ENCODE measurements at regions of chr15 and their contacts with region 1.

Region 1: DNA sequence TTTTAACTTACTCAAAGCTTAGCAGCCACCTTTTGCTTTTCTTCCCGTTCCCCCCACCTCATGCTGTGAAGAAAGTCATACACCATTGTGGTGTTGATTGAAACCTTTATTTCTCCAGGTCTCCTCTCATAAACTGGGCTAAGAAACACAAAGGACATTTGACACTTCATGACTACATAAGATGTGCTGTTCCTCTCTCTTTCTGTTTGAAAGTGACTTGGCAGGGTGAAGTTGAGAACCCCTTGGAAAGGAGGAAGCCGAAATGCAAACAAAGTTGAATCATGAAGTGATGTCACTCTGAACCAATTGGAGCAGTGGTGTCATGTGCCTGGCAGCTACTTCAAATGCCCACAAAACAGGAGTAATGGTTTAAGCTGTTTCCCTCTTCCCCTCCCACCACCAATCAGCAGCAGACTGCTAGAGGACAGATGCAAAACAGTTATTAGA is 174.7 kb downstream of the IGF1R start:
- DNase-seq: peak; percentile 55

Region 2: DNA sequence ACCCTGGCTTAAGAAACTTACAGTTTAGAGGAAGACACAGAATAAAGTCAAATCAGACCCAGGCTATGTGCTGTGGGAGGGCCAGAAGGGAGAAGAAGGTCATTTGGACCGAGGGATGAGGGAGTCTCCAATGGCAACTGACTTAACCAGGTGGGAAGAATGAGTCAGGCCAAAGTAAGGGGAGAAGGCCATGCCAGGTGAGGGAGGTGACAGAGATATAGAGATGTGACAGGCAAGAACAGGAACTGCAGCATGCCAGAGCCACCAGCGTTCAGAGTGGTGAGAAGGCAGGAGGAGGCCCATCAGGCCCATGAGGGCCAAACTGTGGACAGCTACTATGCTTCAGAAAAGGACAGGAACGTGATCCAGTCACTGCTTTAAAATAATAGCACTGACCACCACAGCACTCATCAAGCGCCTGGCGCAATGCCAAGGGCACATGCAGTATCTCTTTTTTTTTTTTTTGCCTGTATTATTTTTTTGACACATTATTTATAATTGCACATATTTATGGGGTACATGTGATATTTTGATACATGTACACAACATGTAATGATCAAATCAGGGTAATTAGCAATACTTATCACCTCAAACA is 329.0 kb before region 1 on chr15:
- CTCF ChIA-PET with region 1: no interaction called
- POLR2A ChIA-PET with region 1: no interaction called
- DNase-seq: no peak

Region 3: GRCh38 chr15:98805434-98806274 is 17.4 kb before region 1 on chr15:
- CTCF ChIA-PET with region 1: interaction called, 12 read pairs
- POLR2A ChIA-PET with region 1: interaction called, 3 read pairs
- DNase-seq: peak; percentile 60